ENCODE measurements at regions of chr17 and their contacts with region 1.

Region 1: GRCh38 chr17:72725433-72726068 is 366.9 kb downstream of the SLC39A11 start:
- DNase-seq: peak; percentile 77
- H3K4me3 Mint-ChIP-seq: no peak overlapping the region
- H3K27ac Mint-ChIP-seq: peak overlapping the region; percentile 2
- H3K4me1 Mint-ChIP-seq: peaks cover 45% of the 10 kb centered on the region
- H3K27me3 Mint-ChIP-seq: no peaks in the 10 kb centered on the region
- CTCF ChIP-seq: peak; percentile 90

Region 2: DNA sequence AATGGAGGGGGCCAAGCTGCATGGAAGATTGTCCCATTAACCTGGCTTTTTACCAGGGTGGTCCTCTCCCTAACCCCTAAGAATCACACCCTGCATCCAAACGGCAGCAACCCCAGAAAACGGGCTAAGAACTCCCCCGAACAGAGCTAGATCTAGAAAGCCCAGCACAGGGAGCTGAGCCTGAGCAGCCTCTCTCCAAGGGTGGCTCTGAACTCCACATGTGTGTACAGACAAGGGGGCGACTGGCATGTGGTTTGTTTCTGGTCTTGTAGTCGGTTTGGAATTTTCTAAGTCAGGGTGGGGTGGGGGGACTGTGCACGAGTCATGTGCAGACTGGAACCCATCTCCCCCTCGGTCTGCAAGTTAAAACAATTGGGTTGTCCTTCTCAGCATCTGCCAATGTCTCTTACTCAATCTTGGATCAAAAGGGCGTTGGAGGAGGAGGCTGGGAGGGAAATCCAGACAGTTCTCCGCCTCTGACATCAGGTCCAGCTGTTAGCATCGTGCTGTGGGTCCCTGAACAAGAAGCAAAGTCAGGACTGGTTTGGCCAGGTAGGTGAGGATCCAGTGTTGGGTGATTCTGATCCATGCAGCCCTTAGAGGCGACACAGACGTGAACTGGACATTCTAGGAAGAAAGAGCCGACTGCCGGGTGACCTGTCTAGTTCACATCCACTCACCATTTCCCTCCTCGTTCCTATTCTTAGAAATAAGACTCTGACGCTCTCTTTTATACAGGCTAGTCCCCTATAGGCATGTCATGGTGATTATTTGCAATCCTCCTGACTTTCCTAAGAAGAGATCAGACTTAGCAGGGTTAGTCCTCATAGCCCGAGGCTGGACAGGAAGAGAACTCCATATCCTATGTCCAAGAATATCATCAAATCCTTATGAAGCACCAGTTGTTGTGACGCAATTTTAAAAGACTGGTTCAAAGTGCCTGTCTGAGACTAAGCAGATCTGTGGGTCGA is 222.9 kb before region 1 on chr17:
- CTCF ChIA-PET with region 1: no interaction called
- intact Hi-C with region 1: no loop called
- DNase-seq: no peak
- H3K4me3 Mint-ChIP-seq: no peak overlapping the region
- H3K27ac Mint-ChIP-seq: peak overlapping the region; percentile 78
- H3K4me1 Mint-ChIP-seq: peaks cover 34% of the 10 kb centered on the region
- H3K27me3 Mint-ChIP-seq: no peaks in the 10 kb centered on the region
- CTCF ChIP-seq: no peak

Region 3: GRCh38 chr17:72697602-72698146 is 27.9 kb before region 1 on chr17:
- CTCF ChIA-PET with region 1: no interaction called
- intact Hi-C with region 1: no loop called
- DNase-seq: no peak
- H3K4me3 Mint-ChIP-seq: no peak overlapping the region
- H3K27ac Mint-ChIP-seq: peak overlapping the region; percentile 23
- H3K4me1 Mint-ChIP-seq: peaks cover 37% of the 10 kb centered on the region
- H3K27me3 Mint-ChIP-seq: no peaks in the 10 kb centered on the region
- CTCF ChIP-seq: no peak

Region 4: DNA sequence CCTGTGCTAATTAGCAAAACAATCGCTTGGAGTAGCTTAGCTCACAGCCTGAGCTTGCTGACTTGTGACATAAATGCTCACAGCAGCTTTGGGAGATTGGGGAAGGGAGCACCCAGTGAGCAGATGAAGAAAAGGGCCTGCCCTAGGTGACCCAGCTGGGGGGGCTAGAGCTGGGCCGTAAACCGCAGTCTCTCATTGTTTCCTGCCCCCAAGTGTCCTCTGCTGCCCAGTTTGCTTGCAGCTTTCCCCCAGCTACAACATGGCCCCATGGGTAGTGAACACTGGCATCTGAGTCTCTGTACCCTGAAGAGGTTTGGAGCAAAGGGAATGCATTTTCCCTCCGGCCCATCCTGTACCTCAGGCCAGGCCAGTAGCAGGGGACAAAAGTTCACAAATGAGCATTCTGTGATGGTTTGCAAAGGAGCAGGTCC is 17.5 kb after region 1 on chr17:
- CTCF ChIA-PET with region 1: no interaction called
- intact Hi-C with region 1: no loop called
- DNase-seq: no peak
- H3K4me3 Mint-ChIP-seq: no peak overlapping the region
- H3K27ac Mint-ChIP-seq: no peak overlapping the region
- H3K4me1 Mint-ChIP-seq: no peaks in the 10 kb centered on the region
- H3K27me3 Mint-ChIP-seq: no peaks in the 10 kb centered on the region
- CTCF ChIP-seq: no peak

Region 5: DNA sequence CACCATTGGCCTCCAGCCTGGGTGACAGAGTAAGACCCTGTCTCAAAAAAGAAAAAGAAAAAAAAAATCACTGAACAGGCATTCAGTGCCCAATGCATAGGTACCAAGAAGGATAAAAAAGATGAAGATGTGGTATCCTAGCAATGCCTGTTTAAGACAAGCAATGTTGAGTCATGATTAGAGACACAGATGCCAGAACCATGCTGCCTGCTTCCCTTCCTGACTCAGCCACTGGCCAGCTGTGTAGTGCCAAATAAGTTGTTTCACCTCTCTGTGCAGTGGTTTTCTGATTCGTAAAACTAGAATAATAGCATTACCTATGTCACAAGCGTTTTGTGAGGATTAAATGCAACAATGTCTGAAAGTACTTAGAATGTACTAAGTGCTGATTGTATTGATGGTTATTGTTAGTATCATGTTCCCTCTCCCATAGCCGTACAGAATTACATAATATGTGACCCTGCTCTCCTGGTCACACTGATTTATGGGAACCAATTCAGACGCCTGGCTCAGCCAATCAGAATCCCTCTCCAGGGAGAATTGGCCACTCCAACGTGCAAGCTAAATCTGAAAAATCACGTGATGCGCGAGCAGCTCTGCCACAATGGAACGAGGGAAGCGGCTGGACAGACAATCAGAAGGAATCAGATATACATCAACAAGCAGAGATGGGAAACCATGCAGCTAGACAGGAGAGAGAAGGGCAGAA is 125.0 kb after region 1 on chr17:
- CTCF ChIA-PET with region 1: no interaction called
- intact Hi-C with region 1: no loop called
- DNase-seq: no peak
- H3K4me3 Mint-ChIP-seq: no peak overlapping the region
- H3K27ac Mint-ChIP-seq: no peak overlapping the region
- H3K4me1 Mint-ChIP-seq: no peaks in the 10 kb centered on the region
- H3K27me3 Mint-ChIP-seq: no peaks in the 10 kb centered on the region
- CTCF ChIP-seq: no peak

Region 6: GRCh38 chr17:73156166-73156840 is 430.8 kb after region 1 on chr17:
- CTCF ChIA-PET with region 1: interaction called, 23 read pairs
- intact Hi-C with region 1: loop called (anchors 2 kb)
- DNase-seq: peak; percentile 82
- H3K4me3 Mint-ChIP-seq: peak overlapping the region; percentile 32
- H3K27ac Mint-ChIP-seq: no peak overlapping the region
- H3K4me1 Mint-ChIP-seq: peaks cover 26% of the 10 kb centered on the region
- H3K27me3 Mint-ChIP-seq: peaks cover 22% of the 10 kb centered on the region
- CTCF ChIP-seq: peak; percentile 52

Region 7: GRCh38 chr17:73191426-73192291 is 466.1 kb after region 1 on chr17:
- CTCF ChIA-PET with region 1: interaction called, 41 read pairs
- intact Hi-C with region 1: loop called (anchors 1 kb)
- DNase-seq: peak; percentile 68
- H3K4me3 Mint-ChIP-seq: peak overlapping the region; percentile 98
- H3K27ac Mint-ChIP-seq: no peak overlapping the region
- H3K4me1 Mint-ChIP-seq: peaks cover 7% of the 10 kb centered on the region
- H3K27me3 Mint-ChIP-seq: no peaks in the 10 kb centered on the region
- CTCF ChIP-seq: peak; percentile 69

Region 8: DNA sequence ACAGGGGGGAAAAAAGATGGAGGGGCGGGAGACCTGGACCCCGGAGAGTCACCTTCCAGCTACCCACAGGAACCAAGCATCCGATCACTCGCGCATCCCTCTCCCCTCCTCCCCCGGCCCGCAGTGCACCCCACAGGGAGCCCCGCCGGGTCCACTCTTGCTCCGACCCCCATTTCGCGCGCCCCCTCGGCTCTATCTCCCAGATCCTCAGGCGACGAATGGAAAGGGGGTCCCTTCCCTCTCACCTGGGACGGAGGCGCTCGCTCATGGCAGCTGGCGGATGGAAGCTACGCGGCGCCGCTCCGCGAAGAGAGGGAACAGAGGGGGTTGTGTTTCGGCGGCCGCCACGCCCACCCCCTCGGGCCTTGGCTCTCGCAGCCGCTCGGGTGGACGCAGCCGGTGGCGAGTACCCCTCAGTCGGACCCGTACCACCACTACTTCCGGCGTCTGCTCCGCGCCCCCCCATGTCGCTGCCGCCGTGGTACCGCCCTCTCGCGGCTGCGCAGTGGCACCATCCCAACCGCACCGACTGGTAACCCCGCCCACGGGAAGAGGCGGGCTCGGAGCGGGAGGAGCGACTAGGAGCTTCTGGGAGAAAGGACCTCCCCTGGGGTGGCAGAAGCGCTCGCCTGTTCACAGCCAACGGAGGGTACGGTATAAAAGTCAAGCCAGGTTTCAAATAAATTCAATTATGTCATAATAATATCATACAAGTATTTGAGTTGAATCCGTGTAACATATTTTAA is 506.5 kb after region 1 on chr17:
- CTCF ChIA-PET with region 1: interaction called, 11 read pairs
- intact Hi-C with region 1: no loop called
- DNase-seq: peak; percentile 97
- H3K4me3 Mint-ChIP-seq: peak overlapping the region; percentile 97
- H3K27ac Mint-ChIP-seq: peak overlapping the region; percentile 93
- H3K4me1 Mint-ChIP-seq: peaks cover 44% of the 10 kb centered on the region
- H3K27me3 Mint-ChIP-seq: no peaks in the 10 kb centered on the region
- CTCF ChIP-seq: no peak

Region 9: DNA sequence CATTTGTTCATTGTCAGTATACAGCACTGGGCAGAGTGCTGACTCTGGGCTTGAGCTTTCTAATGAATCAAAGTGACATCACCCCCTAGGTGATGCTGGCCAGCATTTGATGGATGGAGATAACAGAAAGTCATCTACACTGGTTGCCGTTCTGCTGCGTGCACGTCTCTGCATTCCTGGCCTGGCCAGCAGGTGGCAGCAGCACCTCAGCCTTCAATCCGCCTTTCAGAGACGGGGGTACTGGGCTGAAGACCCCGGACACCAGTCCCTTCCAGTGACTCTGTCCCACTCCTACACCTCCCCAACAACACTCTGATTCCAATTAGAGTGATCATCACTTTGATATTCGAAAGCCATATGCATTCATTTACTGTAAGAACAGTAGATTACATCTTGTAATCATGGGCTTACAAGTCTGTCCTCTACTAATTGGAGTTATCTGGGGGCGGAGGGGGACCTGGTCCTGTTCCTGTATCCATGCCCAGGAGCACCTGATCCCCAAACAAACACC is 530.2 kb after region 1 on chr17:
- CTCF ChIA-PET with region 1: no interaction called
- intact Hi-C with region 1: loop called (anchors 2 kb)
- DNase-seq: peak; percentile 56
- H3K4me3 Mint-ChIP-seq: no peak overlapping the region
- H3K27ac Mint-ChIP-seq: no peak overlapping the region
- H3K4me1 Mint-ChIP-seq: peaks cover 8% of the 10 kb centered on the region
- H3K27me3 Mint-ChIP-seq: peaks cover 15% of the 10 kb centered on the region
- CTCF ChIP-seq: peak; percentile 98

Measured in Calu3 (cell line).